ENCODE measurements at regions of chr17 and their contacts with region 1.

Region 1: DNA sequence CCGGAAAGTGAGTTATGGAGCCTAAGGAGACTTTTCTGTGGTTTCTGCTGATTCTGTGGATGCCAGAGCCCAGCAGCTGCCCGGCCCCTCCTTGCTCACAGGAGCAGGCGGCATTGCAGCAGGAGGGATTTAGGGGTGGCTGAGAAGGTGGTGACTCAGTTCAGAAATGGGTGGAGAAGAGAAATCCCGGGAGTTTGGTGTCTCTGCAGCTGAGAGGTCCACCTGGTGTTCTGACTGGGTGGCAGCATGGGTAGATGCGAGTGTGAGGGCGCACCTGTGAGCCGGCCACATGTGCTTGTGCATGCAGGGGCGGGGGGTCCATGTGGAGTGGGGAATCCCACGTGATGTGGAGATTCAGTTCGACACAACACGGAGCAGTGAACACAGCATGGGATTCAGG is 16.1 kb upstream of the SPPL2C start:
- DNase-seq: no peak
- ATAC-seq: no peak
- H3K4me3 ChIP-seq: no peak overlapping the region
- H3K27ac ChIP-seq: no peak overlapping the region
- H3K4me1 ChIP-seq: no peaks in the 10 kb centered on the region
- CTCF ChIP-seq: no peak
- EP300 ChIP-seq: no peak
- POLR2A ChIP-seq: no peak
- RAD21 ChIP-seq: peak in 1 of 2 experiments; percentile 23; a peak in 1 of 5 replicates

Region 2: GRCh38 chr17:45021607-45022287 is 806.9 kb before region 1 on chr17:
- CTCF ChIA-PET with region 1: no interaction called
- POLR2A ChIA-PET with region 1: no interaction called
- DNase-seq: peak; percentile 67 to 93
- ATAC-seq: peak; percentile 63 to 86
- H3K4me3 ChIP-seq: peak overlapping the region; percentile 16; the same call in 1 of the 3 replicates
- H3K27ac ChIP-seq: peak overlapping the region; percentile 55 to 76
- H3K4me1 ChIP-seq: peaks cover 24% of the 10 kb centered on the region
- CTCF ChIP-seq: peak; percentile 99
- EP300 ChIP-seq: no peak
- POLR2A ChIP-seq: no peak; the same call in 1 of the 2 replicates
- RAD21 ChIP-seq: peak; percentile 76 to 96

Region 3: DNA sequence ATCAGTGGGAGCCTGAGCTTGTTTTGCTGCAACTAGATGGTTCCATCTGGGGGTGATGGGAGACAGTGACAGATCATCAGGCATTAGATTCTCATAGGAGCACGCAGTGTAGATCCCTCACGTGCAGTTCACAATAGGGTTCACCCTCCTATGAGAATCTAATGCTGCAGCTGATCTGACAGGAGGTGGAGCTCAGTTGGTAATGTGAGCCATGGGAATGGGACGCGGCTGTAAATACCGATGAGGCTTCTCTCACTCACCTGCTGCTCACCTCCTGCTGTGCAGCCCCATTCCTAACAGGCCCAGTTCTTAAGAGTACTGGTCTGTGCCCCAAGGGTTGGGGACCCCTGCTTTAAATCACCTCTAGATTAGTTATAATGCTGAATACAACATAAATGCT is 200.6 kb before region 1 on chr17:
- CTCF ChIA-PET with region 1: interaction called, 17 read pairs
- POLR2A ChIA-PET with region 1: no interaction called
- DNase-seq: no peak
- ATAC-seq: no peak
- H3K4me3 ChIP-seq: no peak overlapping the region
- H3K27ac ChIP-seq: no peak overlapping the region
- H3K4me1 ChIP-seq: no peaks in the 10 kb centered on the region
- CTCF ChIP-seq: no peak
- EP300 ChIP-seq: no peak
- POLR2A ChIP-seq: no peak
- RAD21 ChIP-seq: no peak

Region 4: DNA sequence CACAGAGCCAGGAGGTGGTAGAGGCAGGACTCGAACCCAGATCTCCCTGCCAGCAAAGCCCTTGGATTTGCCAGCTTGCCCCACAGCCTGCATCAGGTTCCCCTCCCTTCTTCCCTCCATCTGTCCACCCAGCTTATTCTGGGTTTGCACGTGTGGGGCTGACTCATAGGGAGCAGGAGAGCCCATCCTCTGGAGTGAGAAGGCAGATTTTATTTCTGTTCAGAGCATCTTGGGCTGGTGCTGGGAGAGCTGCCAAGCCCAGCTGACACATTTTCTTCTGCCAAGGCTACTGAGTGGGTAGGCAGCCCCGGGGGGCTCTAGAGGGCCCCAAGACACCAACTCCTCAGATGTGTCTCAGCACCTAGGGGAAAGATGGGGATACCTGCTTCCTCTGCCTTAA is 150.9 kb before region 1 on chr17:
- CTCF ChIA-PET with region 1: interaction called, 10 read pairs
- POLR2A ChIA-PET with region 1: no interaction called
- DNase-seq: peak in 1 of 2 experiments; percentile 29
- ATAC-seq: peak; percentile 48 to 54; a peak in 4 of 6 replicates
- H3K4me3 ChIP-seq: no peak overlapping the region
- H3K27ac ChIP-seq: no peak overlapping the region
- H3K4me1 ChIP-seq: no peaks in the 10 kb centered on the region
- CTCF ChIP-seq: no peak
- EP300 ChIP-seq: no peak
- POLR2A ChIP-seq: no peak
- RAD21 ChIP-seq: no peak

Region 5: DNA sequence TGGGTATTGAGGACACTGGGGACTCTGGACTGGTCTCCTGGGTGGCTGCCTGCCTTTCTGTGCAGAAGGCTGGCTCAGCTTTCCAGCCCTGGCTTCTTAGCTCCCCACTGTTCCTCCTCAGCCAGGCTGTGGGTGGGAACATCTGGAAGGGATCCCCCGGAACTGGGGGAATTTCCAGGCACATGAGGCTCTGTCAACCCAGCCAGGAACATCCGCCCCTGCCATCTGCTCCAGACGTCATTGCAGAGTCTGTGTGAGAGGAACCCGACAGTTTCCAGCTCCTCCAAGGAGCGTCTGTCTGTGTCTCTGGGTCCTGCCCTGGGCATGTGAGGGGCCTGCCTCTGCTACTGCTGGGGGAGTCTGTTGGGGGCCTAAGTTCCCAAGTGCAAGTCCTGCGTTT is 80.7 kb before region 1 on chr17:
- CTCF ChIA-PET with region 1: interaction called, 14 read pairs
- POLR2A ChIA-PET with region 1: no interaction called
- DNase-seq: no peak
- ATAC-seq: no peak
- H3K4me3 ChIP-seq: no peak overlapping the region
- H3K27ac ChIP-seq: no peak overlapping the region
- H3K4me1 ChIP-seq: no peaks in the 10 kb centered on the region
- CTCF ChIP-seq: no peak
- EP300 ChIP-seq: no peak
- POLR2A ChIP-seq: no peak
- RAD21 ChIP-seq: no peak

Region 6: GRCh38 chr17:45794840-45795239 is 33.8 kb before region 1 on chr17:
- CTCF ChIA-PET with region 1: interaction called, 21 read pairs
- POLR2A ChIA-PET with region 1: no interaction called
- DNase-seq: peak; percentile 49 to 66
- ATAC-seq: peak; percentile 33 to 74; a peak in 3 of 6 replicates
- H3K4me3 ChIP-seq: no peak overlapping the region
- H3K27ac ChIP-seq: no peak overlapping the region
- H3K4me1 ChIP-seq: no peaks in the 10 kb centered on the region
- CTCF ChIP-seq: no peak; the same call in 2 of the 3 replicates
- EP300 ChIP-seq: no peak
- POLR2A ChIP-seq: no peak
- RAD21 ChIP-seq: peak in 1 of 2 experiments; percentile 28; a peak in 2 of 5 replicates

Region 7: GRCh38 chr17:45812102-45812501 is 16.5 kb before region 1 on chr17:
- CTCF ChIA-PET with region 1: interaction called, 63 read pairs
- POLR2A ChIA-PET with region 1: no interaction called
- DNase-seq: peak; percentile 40 to 64
- ATAC-seq: peak; percentile 30 to 48; a peak in 3 of 6 replicates
- H3K4me3 ChIP-seq: no peak overlapping the region
- H3K27ac ChIP-seq: no peak overlapping the region
- H3K4me1 ChIP-seq: no peaks in the 10 kb centered on the region
- CTCF ChIP-seq: 0 out of 3 replicates have a peak, but pooled peaks have one; percentile 12
- EP300 ChIP-seq: no peak
- POLR2A ChIP-seq: no peak
- RAD21 ChIP-seq: no peak

Region 8: DNA sequence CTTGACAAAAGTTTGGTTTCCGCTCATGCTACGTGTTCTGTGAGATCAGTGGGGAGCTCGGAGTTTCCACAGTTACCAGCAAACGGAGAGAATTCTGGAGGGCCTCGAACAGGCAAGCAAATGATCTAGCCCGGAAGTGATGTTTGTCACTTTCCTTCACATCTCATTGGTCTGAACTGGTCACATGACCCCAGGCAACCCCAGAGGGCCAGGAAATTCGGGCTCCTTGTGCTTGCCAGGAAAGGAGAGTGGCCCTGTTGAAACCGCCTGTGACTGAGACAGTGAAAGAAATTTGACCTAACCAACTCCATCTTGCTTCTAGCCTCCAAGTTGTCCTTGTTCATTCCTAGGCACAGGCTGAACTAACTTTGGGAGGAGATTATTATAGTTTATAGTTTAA is 39.1 kb after region 1 on chr17:
- CTCF ChIA-PET with region 1: interaction called, 13 read pairs
- POLR2A ChIA-PET with region 1: no interaction called
- DNase-seq: no peak
- ATAC-seq: no peak
- H3K4me3 ChIP-seq: no peak overlapping the region
- H3K27ac ChIP-seq: no peak overlapping the region
- H3K4me1 ChIP-seq: no peaks in the 10 kb centered on the region
- CTCF ChIP-seq: no peak
- EP300 ChIP-seq: no peak
- POLR2A ChIP-seq: no peak
- RAD21 ChIP-seq: no peak

Region 9: GRCh38 chr17:45902892-45903346 is 74.3 kb after region 1 on chr17:
- CTCF ChIA-PET with region 1: no interaction called
- POLR2A ChIA-PET with region 1: no interaction called
- DNase-seq: peak in 1 of 2 experiments; percentile 28
- ATAC-seq: peak; percentile 44 to 50; a peak in 3 of 6 replicates
- H3K4me3 ChIP-seq: no peak overlapping the region
- H3K27ac ChIP-seq: no peak overlapping the region
- H3K4me1 ChIP-seq: 0 out of 3 replicates have a peak, but pooled peaks cover 4% of the 10 kb centered on the region
- CTCF ChIP-seq: no peak
- EP300 ChIP-seq: no peak
- POLR2A ChIP-seq: no peak
- RAD21 ChIP-seq: no peak

Region 10: GRCh38 chr17:45982791-45983613 is 154.4 kb after region 1 on chr17:
- CTCF ChIA-PET with region 1: no interaction called
- POLR2A ChIA-PET with region 1: no interaction called
- DNase-seq: no peak
- ATAC-seq: no peak
- H3K4me3 ChIP-seq: no peak overlapping the region
- H3K27ac ChIP-seq: no peak overlapping the region
- H3K4me1 ChIP-seq: no peaks in the 10 kb centered on the region
- CTCF ChIP-seq: no peak
- EP300 ChIP-seq: no peak
- POLR2A ChIP-seq: no peak
- RAD21 ChIP-seq: no peak

Region 11: DNA sequence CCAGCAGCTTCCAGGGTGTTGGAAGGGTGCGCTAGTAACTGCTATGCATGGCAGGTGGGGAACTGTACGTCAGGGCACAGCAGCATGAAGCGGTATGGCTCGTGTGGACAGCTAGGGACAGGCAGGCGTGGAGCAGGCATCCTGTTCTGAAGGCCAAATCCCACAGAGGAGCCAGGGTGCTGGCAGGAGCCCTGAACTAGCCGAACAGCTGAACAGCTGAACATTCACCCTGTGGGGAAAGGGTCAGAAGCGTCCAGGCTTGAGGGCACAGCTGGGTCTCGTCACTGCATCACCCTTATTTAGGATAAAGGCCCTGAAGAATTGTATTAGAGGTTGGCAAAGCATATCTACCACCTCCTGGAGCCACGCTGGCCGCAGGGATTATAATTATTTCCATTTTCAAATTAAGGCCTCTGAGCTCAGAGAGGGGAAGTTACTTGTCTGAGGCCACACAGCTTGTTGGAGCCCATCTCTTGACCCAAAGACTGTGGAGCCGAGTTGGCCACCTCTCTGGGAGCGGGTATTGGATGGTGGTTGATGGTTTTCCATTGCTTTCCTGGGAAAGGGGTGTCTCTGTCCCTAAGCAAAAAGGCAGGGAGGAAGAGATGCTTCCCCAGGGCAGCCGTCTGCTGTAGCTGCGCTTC is 167.1 kb after region 1 on chr17:
- CTCF ChIA-PET with region 1: no interaction called
- POLR2A ChIA-PET with region 1: no interaction called
- DNase-seq: no peak
- ATAC-seq: peak; percentile 9 to 13; a peak in 1 of 6 replicates
- H3K4me3 ChIP-seq: no peak overlapping the region
- H3K27ac ChIP-seq: no peak overlapping the region
- H3K4me1 ChIP-seq: no peaks in the 10 kb centered on the region
- CTCF ChIP-seq: no peak
- EP300 ChIP-seq: no peak
- POLR2A ChIP-seq: no peak
- RAD21 ChIP-seq: no peak